Aorta (tissue), 5 donors: ENCODE measurements at regions of chrX and their contacts with region 1.

Region 1: DNA sequence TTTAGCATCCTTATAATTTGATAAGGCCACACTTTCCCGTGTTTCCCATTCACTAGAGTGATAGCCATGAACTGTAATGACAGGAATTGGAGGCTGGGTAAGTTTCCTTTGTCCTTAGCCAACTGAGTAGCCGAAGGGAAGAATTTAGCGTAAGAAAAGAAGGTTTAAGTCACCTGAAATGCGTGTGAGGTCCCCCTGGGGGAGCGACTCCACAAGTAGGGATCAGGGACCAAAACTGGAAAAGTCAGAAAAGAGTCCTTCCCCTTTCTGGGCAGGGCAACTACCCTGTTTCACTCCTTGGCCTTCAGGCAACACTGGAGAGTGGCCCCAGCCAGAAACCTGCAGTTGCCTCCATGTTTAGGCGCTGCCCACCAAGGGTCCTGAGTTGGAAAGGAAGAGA is 81.6 kb upstream of the MED14 start:
- DNase-seq: no peak
- ATAC-seq: no peak
- H3K4me3 ChIP-seq: no peak overlapping the region
- H3K27ac ChIP-seq: peak overlapping the region in 1 of 2 donors; percentile 6
- H3K4me1 ChIP-seq: no peaks in the 10 kb centered on the region
- H3K27me3 ChIP-seq: no peaks in the 10 kb centered on the region

Region 2: DNA sequence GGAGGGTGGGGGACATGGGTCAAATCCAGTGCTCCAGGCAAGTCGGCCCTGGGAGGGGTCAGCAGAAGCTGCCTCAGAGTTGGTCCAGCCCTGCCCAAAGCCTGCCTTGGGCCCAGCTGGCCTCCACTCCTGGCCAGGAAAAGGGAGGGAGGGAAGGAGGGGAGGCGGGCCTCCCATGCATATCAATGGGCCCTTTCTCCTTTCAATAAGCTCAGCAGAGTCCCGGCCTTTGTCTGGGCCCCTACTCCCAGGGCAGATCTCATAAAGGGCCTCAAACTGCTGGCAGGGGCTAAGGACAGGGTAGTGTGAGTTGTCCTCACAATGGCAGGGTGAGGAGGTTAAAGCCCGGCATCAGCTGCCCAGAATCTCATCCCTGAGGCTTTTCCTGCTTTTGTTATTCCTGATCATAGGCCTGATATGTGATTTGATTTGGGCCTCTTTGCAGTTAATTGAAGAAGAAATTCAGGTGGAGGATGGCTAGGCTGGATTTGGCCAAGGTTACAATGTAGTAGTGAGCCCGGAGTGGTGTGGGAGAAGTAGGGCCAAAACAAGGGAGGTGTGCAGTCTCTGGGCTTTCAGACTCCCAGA is 357.2 kb before region 1 on chrX:
- intact Hi-C with region 1: loop called in 1 of 2 experiments (anchors 10 kb)
- DNase-seq: no peak
- ATAC-seq: no peak
- H3K4me3 ChIP-seq: no peak overlapping the region
- H3K27ac ChIP-seq: no peak overlapping the region
- H3K4me1 ChIP-seq: no peaks in the 10 kb centered on the region
- H3K27me3 ChIP-seq: no peaks in the 10 kb centered on the region

Region 3: GRCh38 chrX:40908857-40909475 is 92.1 kb after region 1 on chrX:
- intact Hi-C with region 1: no loop called
- DNase-seq: no peak
- ATAC-seq: no peak
- H3K4me3 ChIP-seq: no peak overlapping the region
- H3K27ac ChIP-seq: no peak overlapping the region
- H3K4me1 ChIP-seq: no peaks in the 10 kb centered on the region
- H3K27me3 ChIP-seq: no peaks in the 10 kb centered on the region